Activated T-helper 1 cell treated with anti-CD3 and anti-CD28 coated beads, Interleukin-12 subunit alpha, Interleukin-12 subunit beta, Interleukin-2, Interleukin-4 antibody, amounts not matched to agents 30 ng/mL and 10 ng/mL and 1 ng/mL, durations not matched to agents 14 hours and 24 hours and 36 hours (primary cell): ENCODE measurements at regions of chr5 and their contacts with region 1.

Region 1: GRCh38 chr5:82476155-82476554 is 198.0 kb upstream of the RPS23 start:
- DNase-seq: no peak
- H3K4me3 Mint-ChIP-seq: no peak overlapping the region
- H3K27ac Mint-ChIP-seq: no peak overlapping the region
- H3K4me1 Mint-ChIP-seq: no peaks in the 10 kb centered on the region
- H3K27me3 Mint-ChIP-seq: no peaks in the 10 kb centered on the region

Region 2: DNA sequence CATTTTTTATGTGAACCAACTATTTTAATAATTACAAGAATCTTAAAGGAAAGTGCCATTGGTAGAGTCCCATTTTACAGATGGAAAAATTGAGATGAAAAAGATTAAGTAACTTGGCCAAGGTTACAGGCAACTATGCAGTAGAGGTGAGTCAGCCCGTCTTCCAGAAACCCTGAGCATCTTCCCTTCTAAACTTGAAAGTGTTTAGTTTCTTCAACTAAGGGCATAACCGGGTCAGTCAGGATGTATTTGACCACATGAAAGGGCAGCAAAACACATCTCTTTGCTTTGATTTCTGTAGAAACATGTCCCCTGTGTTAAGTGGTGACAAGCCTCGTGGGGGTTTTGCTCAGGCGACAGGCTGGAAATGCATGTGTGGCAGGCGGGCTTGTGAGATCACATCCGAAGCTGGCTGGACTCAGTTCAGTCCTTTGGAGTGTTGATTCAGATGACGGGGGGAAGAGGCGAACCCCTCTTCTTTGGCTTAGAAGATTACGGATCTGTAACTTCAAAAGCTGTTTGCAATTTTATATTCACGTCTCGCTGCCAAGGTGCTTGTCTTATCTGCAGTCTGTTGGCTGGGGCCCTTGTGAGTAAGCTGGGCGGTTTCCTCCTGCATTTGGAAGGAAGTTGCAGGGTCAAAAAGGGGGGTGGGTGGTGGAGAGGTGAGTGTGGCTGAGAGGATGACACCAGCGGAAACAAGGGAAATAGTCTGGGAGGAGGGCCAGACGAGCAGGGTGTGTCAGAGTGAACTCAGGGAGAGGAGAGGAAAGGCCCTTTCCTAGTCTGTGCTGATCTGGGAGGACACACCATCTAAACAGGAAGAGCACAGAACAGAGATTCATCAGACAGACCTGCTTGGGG is 119.1 kb before region 1 on chr5:
- intact Hi-C with region 1: no loop called
- DNase-seq: peak; percentile 78
- H3K4me3 Mint-ChIP-seq: peak overlapping the region; percentile 70
- H3K27ac Mint-ChIP-seq: peak overlapping the region; percentile 97
- H3K4me1 Mint-ChIP-seq: peaks cover 87% of the 10 kb centered on the region
- H3K27me3 Mint-ChIP-seq: no peaks in the 10 kb centered on the region

Region 3: DNA sequence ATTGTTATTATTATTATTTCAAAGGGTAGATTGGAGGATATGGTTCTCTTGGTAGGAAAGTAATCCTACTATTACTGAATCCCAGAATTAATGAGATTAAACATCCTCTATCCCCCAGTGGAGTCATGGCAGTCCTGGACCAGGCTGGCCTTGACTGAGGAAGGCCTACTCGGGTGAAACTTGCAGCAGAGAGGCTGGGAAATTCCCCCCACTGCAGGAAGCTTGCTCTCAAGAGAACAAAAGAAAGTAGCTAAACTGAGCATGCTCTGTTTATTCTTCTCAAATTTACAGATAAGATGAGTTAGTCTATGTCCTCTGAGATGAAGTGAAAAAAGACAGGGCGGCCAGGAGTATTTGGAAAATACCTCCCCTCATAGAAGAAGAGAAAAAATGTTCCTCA is 35.9 kb after region 1 on chr5:
- intact Hi-C with region 1: no loop called
- DNase-seq: peak; percentile 46
- H3K4me3 Mint-ChIP-seq: no peak overlapping the region
- H3K27ac Mint-ChIP-seq: no peak overlapping the region
- H3K4me1 Mint-ChIP-seq: peaks cover 13% of the 10 kb centered on the region
- H3K27me3 Mint-ChIP-seq: no peaks in the 10 kb centered on the region

Region 4: DNA sequence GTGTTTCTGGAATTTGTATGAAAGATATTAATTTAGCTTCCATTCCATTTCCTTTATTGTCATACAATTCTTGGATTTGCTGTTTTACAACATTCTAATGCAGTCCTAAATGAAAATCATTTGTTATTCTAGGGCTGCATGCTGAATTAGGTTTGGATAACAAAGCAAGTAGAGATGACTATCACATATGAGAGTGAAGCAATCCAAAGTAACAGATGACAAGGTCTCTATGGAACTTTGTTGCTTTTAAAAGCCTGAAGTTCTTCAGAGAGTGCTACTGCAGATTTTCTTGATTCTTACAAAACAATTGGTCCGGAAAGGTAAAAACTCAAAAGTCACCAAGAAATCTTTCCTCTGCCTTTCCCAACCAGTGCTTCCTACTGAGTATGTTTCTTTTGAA is 938.4 kb after region 1 on chr5:
- intact Hi-C with region 1: loop called (anchors 5 kb)
- DNase-seq: no peak
- H3K4me3 Mint-ChIP-seq: no peak overlapping the region
- H3K27ac Mint-ChIP-seq: no peak overlapping the region
- H3K4me1 Mint-ChIP-seq: no peaks in the 10 kb centered on the region
- H3K27me3 Mint-ChIP-seq: peaks cover 2% of the 10 kb centered on the region